Transverse colon (tissue), 4 donors: ENCODE measurements at regions of chr3 and their contacts with region 1.

Region 1: GRCh38 chr3:7469866-7470265 is 609.0 kb downstream of the GRM7 start:
- DNase-seq: no peak
- H3K4me3 ChIP-seq: no peak overlapping the region
- H3K27ac ChIP-seq: no peak overlapping the region
- H3K4me1 ChIP-seq: no peaks in the 10 kb centered on the region
- H3K27me3 ChIP-seq: no peaks in the 10 kb centered on the region
- CTCF ChIP-seq: no peak
- EP300 ChIP-seq: no peak
- POLR2A ChIP-seq: no peak

Region 2: DNA sequence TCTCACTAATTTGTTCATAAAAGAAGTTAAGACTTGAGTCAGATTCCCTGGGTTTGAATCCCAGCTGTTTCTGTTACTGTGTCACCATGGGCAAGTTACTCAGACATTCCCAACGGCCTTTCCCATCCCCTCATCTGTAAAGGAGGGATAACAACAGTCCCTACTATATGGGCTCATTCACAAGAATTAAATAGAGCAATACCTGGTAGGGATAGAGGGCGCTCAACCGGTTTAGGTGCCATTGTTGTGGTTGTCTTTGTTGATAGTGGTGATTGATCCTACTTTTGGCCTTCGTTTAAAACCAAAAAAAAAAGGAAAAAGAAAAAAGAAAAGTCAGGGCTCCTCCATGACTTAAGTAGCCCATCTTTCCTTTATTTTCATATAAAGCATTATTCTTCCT is 45.9 kb before region 1 on chr3:
- in situ Hi-C with region 1: no loop called
- intact Hi-C with region 1: loop called (anchors 1 kb)
- DNase-seq: no peak
- H3K4me3 ChIP-seq: no peak overlapping the region
- H3K27ac ChIP-seq: no peak overlapping the region
- H3K4me1 ChIP-seq: no peaks in the 10 kb centered on the region
- H3K27me3 ChIP-seq: no peaks in the 10 kb centered on the region
- CTCF ChIP-seq: no peak
- EP300 ChIP-seq: no peak
- POLR2A ChIP-seq: no peak